ENCODE measurements at regions of chr12 and their contacts with region 1.

Region 1: GRCh38 chr12:97778111-97778510 is 315.5 kb downstream of the RMST start:
- DNase-seq: no peak
- H3K4me3 ChIP-seq: no peak overlapping the region
- H3K27ac ChIP-seq: no peak overlapping the region
- H3K4me1 ChIP-seq: no peaks in the 10 kb centered on the region
- H3K27me3 ChIP-seq: no peaks in the 10 kb centered on the region
- CTCF ChIP-seq: no peak
- POLR2A ChIP-seq: no peak

Region 2: DNA sequence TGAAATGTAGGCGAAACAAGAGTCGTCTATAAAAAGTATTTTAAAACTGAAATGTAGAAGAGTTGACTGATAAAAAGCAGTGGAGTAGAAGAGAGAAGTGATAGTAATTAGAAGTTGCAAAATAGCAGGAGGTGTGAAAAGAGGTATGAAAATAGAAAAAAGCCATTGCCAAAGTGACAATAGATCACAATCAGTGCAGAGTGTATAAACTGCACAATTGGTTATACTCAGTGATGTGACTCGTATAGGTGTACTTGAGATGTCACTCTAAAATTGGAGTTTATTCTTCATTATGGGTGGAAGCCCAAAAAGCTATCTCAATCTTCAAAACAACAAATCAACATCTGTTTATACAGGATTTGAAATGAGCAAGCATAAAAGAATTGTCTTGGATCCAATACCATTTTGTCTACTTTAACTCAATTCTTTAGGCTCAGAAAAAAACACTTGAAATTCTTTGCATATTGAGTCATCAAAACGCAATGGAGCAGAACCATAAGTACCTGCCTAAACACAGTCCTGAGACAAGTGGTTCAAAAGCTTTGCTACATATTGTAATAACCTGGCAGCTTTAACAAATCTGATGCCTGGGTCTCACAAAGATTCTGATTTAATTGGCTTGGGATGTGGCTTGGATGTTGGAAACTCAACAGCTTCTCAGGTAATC is 857.7 kb after region 1 on chr12:
- intact Hi-C with region 1: loop called (anchors 10 kb)
- DNase-seq: no peak
- H3K4me3 ChIP-seq: no peak overlapping the region
- H3K27ac ChIP-seq: no peak overlapping the region
- H3K4me1 ChIP-seq: no peaks in the 10 kb centered on the region
- H3K27me3 ChIP-seq: no peaks in the 10 kb centered on the region
- CTCF ChIP-seq: no peak
- POLR2A ChIP-seq: no peak